H1 (cell line): ENCODE measurements at regions of chr7 and their contacts with region 1.

Region 1: DNA sequence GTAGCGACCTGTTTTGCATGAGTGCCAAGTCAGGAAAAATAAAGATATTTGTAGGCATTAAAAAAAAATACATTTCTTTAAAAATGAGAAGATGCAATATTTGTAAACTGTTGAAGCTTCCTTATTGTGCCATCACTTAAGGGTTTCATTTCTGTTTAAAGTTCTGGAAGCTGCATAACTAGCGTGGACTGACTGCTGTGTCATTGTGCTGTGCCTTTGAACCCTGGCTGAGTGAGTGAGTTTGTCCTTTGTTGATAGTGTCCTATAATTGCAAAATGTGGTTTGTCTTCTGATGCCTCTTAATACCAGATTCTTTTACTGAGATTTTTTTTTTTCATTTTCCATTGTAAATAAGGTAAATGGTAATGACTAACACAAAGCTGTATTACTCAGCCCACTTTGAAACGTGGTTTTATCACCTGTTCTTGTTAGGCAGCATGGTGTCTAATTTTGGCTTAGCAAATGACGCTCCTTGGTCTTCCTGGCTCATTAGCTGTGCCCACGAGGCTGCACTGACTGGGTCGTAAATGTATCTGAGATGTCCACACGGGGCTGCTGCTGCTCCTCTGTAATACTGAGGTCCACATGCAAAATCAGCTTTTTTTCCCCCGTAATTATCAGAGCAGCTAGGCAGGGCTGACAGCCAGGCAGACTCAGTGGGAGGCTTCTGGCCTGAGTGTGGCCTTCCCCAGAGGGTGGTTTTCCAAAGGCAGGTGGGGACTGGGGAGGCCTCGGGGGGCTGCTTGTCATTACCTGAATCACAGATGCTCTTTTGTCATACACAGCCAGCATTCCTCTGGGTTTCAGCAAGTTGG is 14.8 kb downstream of the ZSCAN25 start:
- DNase-seq: peak in 1 of 2 experiments; percentile 41
- H3K4me3 ChIP-seq: no peak overlapping the region
- H3K27ac ChIP-seq: no peak overlapping the region
- H3K4me1 ChIP-seq: peaks cover 10 to 26% (median 18%) of the 10 kb centered on the region in 4 experiments
- H3K27me3 ChIP-seq: no peaks in the 10 kb centered on the region
- CTCF ChIP-seq: peak; percentile 49 to 65 (median 53)
- EP300 ChIP-seq: peak in 1 of 2 experiments; percentile 67; a peak in 1 of 3 replicates
- POLR2A ChIP-seq: no peak
- RAD21 ChIP-seq: peak; percentile 82 to 84

Region 2: GRCh38 chr7:99674995-99675742 is 43.7 kb after region 1 on chr7:
- CTCF ChIA-PET with region 1: no interaction called
- POLR2A ChIA-PET with region 1: no interaction called
- DNase-seq: no peak
- H3K4me3 ChIP-seq: no peak overlapping the region
- H3K27ac ChIP-seq: no peak overlapping the region
- H3K4me1 ChIP-seq: peaks cover 0 to 3% (median 0%) of the 10 kb centered on the region in 4 experiments; a peak in 1 of 7 replicates
- H3K27me3 ChIP-seq: no peaks in the 10 kb centered on the region
- CTCF ChIP-seq: no peak
- EP300 ChIP-seq: no peak
- POLR2A ChIP-seq: no peak
- RAD21 ChIP-seq: no peak

Region 3: DNA sequence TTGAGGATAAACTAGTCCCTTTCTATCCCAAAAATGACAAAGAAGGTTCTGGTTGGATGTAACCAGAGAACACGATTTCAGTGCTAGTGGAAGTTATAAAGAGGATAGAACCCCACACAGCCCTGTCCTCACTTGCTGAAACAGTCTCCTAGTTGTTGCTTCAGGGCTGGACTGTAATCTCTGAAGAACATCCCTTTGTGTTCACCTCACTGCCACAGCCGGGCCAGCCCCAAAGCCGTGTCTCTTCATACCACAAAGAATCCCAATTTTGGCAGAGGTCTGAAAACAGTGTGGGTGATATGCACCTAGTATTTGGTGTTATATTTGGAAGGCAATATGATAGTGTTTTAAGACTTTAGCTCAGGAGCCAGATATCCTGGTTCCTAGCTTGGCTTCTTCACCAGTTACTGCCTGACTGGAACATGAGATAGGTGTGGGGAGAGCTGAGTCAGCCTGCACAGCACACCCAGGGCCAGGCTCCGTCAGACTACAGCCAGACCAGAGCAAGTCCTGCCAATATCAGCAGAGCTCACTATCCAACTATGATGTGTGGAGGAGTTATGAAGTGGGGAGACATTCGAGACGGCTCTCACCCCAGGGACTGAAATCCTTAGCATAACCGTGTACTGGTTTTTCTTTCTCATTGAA is 131.3 kb after region 1 on chr7:
- CTCF ChIA-PET with region 1: no interaction called
- POLR2A ChIA-PET with region 1: no interaction called
- DNase-seq: no peak
- H3K4me3 ChIP-seq: no peak overlapping the region
- H3K27ac ChIP-seq: no peak overlapping the region
- H3K4me1 ChIP-seq: no peaks in the 10 kb centered on the region
- H3K27me3 ChIP-seq: no peaks in the 10 kb centered on the region
- CTCF ChIP-seq: no peak
- EP300 ChIP-seq: no peak
- POLR2A ChIP-seq: no peak
- RAD21 ChIP-seq: no peak

Region 4: DNA sequence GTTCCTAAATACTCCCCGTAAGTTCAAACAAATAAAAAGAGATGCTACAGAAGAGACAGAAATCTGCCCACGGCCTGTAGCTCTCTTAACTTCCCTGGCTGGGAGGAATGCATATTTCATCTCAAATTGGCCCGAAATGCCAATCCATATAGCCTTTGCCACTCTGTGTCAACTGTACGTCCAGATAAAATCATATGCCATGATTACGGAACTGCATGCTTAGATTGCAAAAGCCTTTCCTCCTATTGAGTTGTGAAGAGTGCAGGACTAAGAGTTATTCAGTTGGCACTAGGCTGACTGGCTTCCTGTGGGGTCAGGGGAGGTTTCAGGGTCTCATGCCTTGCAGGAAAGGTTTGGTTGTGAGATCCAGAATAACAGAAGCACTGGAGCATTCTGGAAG is 353.9 kb after region 1 on chr7:
- CTCF ChIA-PET with region 1: interaction called, 10 read pairs
- POLR2A ChIA-PET with region 1: no interaction called
- DNase-seq: no peak
- H3K4me3 ChIP-seq: no peak overlapping the region
- H3K27ac ChIP-seq: no peak overlapping the region
- H3K4me1 ChIP-seq: peaks cover 0 to 3% (median 1%) of the 10 kb centered on the region in 4 experiments; a peak in 3 of 7 replicates
- H3K27me3 ChIP-seq: no peaks in the 10 kb centered on the region
- CTCF ChIP-seq: no peak
- EP300 ChIP-seq: no peak
- POLR2A ChIP-seq: no peak
- RAD21 ChIP-seq: no peak